Activated T-helper 1 cell treated with anti-CD3 and anti-CD28 coated beads, Interleukin-12 subunit alpha, Interleukin-12 subunit beta, Interleukin-2, Interleukin-4 antibody, amounts not matched to agents 30 ng/mL and 10 ng/mL and 1 ng/mL, durations not matched to agents 14 hours and 24 hours and 36 hours (primary cell): ENCODE measurements at regions of chr15 and their contacts with region 1.

Region 1: GRCh38 chr15:89177633-89178306 is 43.6 kb downstream of the RLBP1 start:
- DNase-seq: peak; percentile 51
- H3K4me3 Mint-ChIP-seq: no peak overlapping the region
- H3K27ac Mint-ChIP-seq: peak overlapping the region; percentile 8
- H3K4me1 Mint-ChIP-seq: peaks cover 33% of the 10 kb centered on the region
- H3K27me3 Mint-ChIP-seq: no peaks in the 10 kb centered on the region

Region 2: DNA sequence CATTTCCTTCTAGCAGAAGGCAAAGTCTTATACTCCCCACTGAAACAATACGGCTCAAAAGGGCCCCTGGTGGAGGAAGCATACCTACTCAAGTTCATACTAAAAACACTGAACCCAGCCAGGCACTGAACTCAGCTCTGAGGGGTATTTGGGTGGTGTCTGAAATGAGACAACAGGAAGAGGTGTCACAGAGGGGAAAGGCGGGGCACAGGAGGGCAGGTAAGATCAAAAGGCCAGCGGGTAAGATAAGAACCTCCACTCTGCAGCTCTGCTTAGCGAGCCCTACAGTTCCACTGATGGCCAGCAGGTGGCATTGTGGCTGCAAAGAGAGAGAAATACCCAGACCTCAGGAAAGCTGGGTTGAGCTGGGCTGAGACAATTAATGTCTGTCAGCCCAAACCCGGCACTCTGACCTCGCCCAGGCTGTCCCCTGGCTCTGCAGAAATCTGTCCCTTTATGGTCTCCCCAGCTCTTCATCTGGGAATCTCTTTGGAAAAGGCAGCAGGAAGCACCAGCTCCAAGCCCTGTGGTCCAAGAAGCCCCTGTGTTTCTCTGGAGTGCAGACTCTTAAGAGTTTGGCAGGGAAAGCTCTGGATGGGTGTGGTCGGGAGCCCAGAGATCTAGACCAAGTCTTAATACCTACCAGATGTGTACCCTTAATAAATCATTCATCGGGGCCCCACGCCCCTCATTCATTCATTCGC is 273.0 kb before region 1 on chr15:
- intact Hi-C with region 1: loop called (anchors 1 kb)
- DNase-seq: peak; percentile 86
- H3K4me3 Mint-ChIP-seq: no peak overlapping the region
- H3K27ac Mint-ChIP-seq: peak overlapping the region; percentile 19
- H3K4me1 Mint-ChIP-seq: peaks cover 22% of the 10 kb centered on the region
- H3K27me3 Mint-ChIP-seq: no peaks in the 10 kb centered on the region

Region 3: DNA sequence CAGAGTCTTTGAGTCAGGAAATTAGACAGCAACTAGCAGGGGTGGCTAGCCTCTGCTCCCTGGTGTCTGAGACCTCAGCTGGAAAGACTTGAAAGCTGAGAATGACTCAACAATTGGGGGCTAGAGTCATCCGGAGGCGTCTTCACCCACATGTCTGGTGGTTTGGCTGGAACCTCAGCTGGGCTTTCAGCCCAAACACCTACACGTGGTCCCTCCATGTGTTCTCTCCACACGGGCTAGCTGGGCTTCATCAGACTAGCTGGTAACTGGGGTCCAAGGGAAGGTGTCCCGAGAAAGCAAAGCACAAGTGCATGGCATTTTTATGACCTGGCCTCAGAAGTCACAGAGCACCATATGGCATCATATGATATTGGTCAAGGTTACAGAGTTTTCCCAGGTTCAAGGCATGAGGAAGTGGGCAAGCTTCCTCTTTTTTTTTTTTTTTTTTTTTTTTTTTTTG is 109.4 kb before region 1 on chr15:
- intact Hi-C with region 1: loop called (anchors 1 kb)
- DNase-seq: peak; percentile 11
- H3K4me3 Mint-ChIP-seq: peak overlapping the region; percentile 10
- H3K27ac Mint-ChIP-seq: peak overlapping the region; percentile 83
- H3K4me1 Mint-ChIP-seq: peaks cover 13% of the 10 kb centered on the region
- H3K27me3 Mint-ChIP-seq: no peaks in the 10 kb centered on the region

Region 4: GRCh38 chr15:89129123-89129815 is 48.5 kb before region 1 on chr15:
- intact Hi-C with region 1: loop called (anchors 1 kb)
- DNase-seq: peak; percentile 16
- H3K4me3 Mint-ChIP-seq: no peak overlapping the region
- H3K27ac Mint-ChIP-seq: no peak overlapping the region
- H3K4me1 Mint-ChIP-seq: peaks cover 19% of the 10 kb centered on the region
- H3K27me3 Mint-ChIP-seq: no peaks in the 10 kb centered on the region

Region 5: DNA sequence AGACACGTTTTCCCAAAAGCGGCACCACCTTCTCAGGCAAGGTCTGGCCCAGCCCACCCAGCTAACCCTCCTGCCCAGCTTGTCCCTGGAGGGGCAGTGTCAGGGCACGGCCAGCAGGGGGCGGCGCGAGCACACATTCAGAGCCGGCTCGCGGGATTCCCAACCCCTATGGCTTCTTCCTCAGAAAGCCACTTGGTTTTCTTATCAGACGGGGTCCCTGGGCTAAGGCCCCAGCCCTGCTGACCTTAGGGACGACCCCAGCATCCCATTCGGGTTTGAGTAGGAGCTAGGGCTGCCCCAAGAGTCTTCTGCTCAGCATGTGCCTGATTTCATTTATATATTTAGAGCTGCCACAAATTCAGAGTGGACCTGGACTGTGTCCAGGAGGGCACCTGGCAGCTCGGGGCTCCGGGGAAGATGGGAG is 29.1 kb after region 1 on chr15:
- intact Hi-C with region 1: loop called (anchors 1 kb)
- DNase-seq: peak; percentile 61
- H3K4me3 Mint-ChIP-seq: no peak overlapping the region
- H3K27ac Mint-ChIP-seq: no peak overlapping the region
- H3K4me1 Mint-ChIP-seq: peaks cover 39% of the 10 kb centered on the region
- H3K27me3 Mint-ChIP-seq: peaks cover 4% of the 10 kb centered on the region